Heart left ventricle (tissue), 16 donors: ENCODE measurements at regions of chr4 and their contacts with region 1.

Region 1: GRCh38 chr4:137543198-137543597 is 10.9 kb upstream of the PCDH18 start:
- DNase-seq: no peak
- ATAC-seq: no peak
- H3K4me3 ChIP-seq: peak overlapping the region in 2 of 12 donors; percentile 29 to 46
- H3K27ac ChIP-seq: peak overlapping the region in 3 of 12 donors; percentile 22 to 34 (median 26)
- H3K4me1 ChIP-seq: peaks cover 0 to 11% (median 0%) of the 10 kb centered on the region in 12 donors
- H3K27me3 ChIP-seq: no peaks in the 10 kb centered on the region
- CTCF ChIP-seq: no peak
- POLR2A ChIP-seq: no peak

Region 2: GRCh38 chr4:137558951-137559350 is 15.8 kb after region 1 on chr4:
- intact Hi-C with region 1: loop called in 1 of 10 experiments (anchors 1 kb)
- DNase-seq: no peak
- ATAC-seq: peak in 1 of 4 donors; percentile 66
- H3K4me3 ChIP-seq: no peak overlapping the region
- H3K27ac ChIP-seq: no peak overlapping the region
- H3K4me1 ChIP-seq: no peaks in the 10 kb centered on the region
- H3K27me3 ChIP-seq: no peaks in the 10 kb centered on the region
- CTCF ChIP-seq: no peak
- POLR2A ChIP-seq: no peak

Region 3: GRCh38 chr4:137861682-137862081 is 318.5 kb after region 1 on chr4:
- intact Hi-C with region 1: no loop called
- DNase-seq: no peak
- ATAC-seq: no peak
- H3K4me3 ChIP-seq: no peak overlapping the region
- H3K27ac ChIP-seq: no peak overlapping the region
- H3K4me1 ChIP-seq: no peaks in the 10 kb centered on the region
- H3K27me3 ChIP-seq: no peaks in the 10 kb centered on the region
- CTCF ChIP-seq: peak in 11 of 12 donors; percentile 26 to 67 (median 45)
- POLR2A ChIP-seq: no peak